ENCODE measurements at regions of chr11 and their contacts with region 1.

Region 1: GRCh38 chr11:65013692-65014145 is 241 bp upstream of the ARL2 start:
- DNase-seq: peak; percentile 86
- H3K27ac ChIP-seq: peak overlapping the region; percentile 98
- CTCF ChIP-seq: no peak; the same call in 1 of the 2 replicates

Region 2: GRCh38 chr11:65027213-65028067 is 13.7 kb after region 1 on chr11 and contains the start of gene SNX15:
- CTCF ChIA-PET with region 1: interaction called, 14 read pairs
- POLR2A ChIA-PET with region 1: interaction called, 3 read pairs
- DNase-seq: peak; percentile 95
- H3K27ac ChIP-seq: peak within 1 kb of the TSS; percentile 95
- CTCF ChIP-seq: peak; percentile 50

Region 3: DNA sequence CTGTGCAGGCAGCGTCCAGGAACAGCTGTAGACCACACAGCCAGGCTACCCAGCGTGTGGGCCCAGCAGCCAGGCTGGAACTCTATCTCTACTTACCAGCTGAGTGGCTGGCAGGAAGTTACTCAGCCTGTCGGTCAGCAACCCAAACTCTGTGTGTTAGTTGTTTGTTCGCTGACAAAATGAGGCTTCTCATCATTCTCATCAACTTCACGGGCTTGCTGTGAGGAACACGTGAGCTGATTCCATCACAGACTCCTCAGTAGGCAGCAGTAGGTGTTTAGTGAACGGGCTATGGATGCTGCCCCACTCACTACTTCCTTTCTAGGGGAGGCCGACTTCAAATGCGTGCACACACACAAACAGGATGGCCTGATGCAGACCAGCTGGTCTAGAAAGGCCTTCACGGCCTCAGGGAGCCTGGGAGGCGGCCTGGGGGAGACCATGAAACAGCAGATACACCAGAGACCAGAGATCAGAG is 155.5 kb after region 1 on chr11:
- CTCF ChIA-PET with region 1: no interaction called
- POLR2A ChIA-PET with region 1: no interaction called
- DNase-seq: no peak
- H3K27ac ChIP-seq: peak overlapping the region; percentile 31
- CTCF ChIP-seq: no peak

Region 4: GRCh38 chr11:65212226-65212801 is 198.6 kb after region 1 on chr11:
- CTCF ChIA-PET with region 1: no interaction called
- POLR2A ChIA-PET with region 1: no interaction called
- DNase-seq: no peak
- H3K27ac ChIP-seq: peak overlapping the region; percentile 55
- CTCF ChIP-seq: no peak